ENCODE measurements at regions of chr7 and their contacts with region 1.

Region 1: DNA sequence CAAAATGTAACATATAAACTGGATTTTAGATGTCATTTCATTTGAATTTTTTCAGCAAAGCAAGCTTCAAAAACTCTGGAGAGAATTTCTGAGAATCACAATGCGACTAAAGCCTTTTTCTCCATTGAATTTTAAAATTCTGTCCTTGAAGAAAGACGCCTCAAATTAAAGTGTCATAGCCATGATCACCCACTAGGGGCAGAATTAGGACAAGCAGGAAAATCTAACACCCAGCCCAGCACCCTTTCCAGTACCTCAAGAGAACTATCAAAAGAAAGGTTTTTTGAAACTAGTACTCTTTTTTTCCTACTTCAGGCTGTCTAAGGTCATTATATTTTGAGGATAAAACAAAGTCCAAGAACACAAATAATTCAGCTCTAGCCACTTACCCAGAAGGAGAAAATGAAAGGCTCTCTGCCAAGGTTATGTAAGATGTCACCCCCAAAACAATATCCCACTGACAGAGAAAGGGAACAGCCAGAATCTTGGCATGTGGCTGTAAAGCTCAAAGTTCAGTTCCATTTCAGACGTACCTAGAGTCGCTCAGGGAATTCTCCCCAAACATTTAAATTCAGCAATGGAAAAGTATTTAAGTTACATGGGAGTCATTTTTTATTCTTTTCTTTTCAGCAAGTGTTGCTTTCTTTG is 299.4 kb downstream of the SNX13 start:
- DNase-seq: no peak
- ATAC-seq: peak; percentile 61

Region 2: DNA sequence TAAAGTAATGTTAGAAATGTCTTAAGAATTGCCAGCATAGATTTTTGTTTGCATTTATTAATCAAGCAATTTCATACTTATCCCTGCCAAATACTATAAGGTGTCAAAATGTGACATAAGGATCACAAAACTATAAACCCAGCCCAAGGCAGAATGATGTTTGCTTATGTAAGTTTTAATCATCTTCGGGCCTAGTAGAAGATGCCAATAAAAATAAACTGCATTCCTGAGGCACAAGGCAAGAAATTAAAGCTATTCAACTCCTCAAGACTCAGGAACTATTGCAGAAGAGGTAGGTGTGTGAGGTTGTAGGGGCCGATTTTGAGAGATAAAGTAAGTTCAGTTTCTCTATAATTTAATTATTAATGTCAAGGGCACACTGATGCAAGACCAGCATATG is 531.8 kb before region 1 on chr7:
- intact Hi-C with region 1: no loop called
- DNase-seq: no peak
- ATAC-seq: no peak

Region 3: GRCh38 chr7:17195576-17195975 is 445.3 kb before region 1 on chr7:
- intact Hi-C with region 1: no loop called
- DNase-seq: no peak
- ATAC-seq: no peak

Region 4: GRCh38 chr7:17304926-17305325 is 335.9 kb before region 1 on chr7:
- intact Hi-C with region 1: loop called (anchors 5 kb)
- DNase-seq: no peak
- ATAC-seq: no peak